ENCODE measurements at regions of chr10 and their contacts with region 1.

Region 1: GRCh38 chr10:37754538-37755323 is 102.7 kb downstream of the ZNF248 start:
- DNase-seq: peak; percentile 7
- ATAC-seq: peak; percentile 76
- H3K4me3 ChIP-seq: no peak overlapping the region
- H3K27ac ChIP-seq: no peak overlapping the region
- H3K4me1 ChIP-seq: no peaks in the 10 kb centered on the region
- H3K27me3 ChIP-seq: no peaks in the 10 kb centered on the region
- CTCF ChIP-seq: peak in 2 of 3 experiments; percentile 69 to 73; a peak in 4 of 6 replicates
- POLR2A ChIP-seq: no peak
- RAD21 ChIP-seq: peak; percentile 55

Region 2: GRCh38 chr10:36888929-36889573 is 865.7 kb before region 1 on chr10:
- CTCF ChIA-PET with region 1: no interaction called
- POLR2A ChIA-PET with region 1: no interaction called
- RAD21 ChIA-PET with region 1: no interaction called
- intact Hi-C with region 1: loop called (anchors 10 kb)
- DNase-seq: peak; percentile 8
- ATAC-seq: no peak
- H3K4me3 ChIP-seq: no peak overlapping the region
- H3K27ac ChIP-seq: no peak overlapping the region
- H3K4me1 ChIP-seq: no peaks in the 10 kb centered on the region
- H3K27me3 ChIP-seq: no peaks in the 10 kb centered on the region
- CTCF ChIP-seq: peak in 2 of 3 experiments; percentile 21 to 47; a peak in 3 of 6 replicates
- POLR2A ChIP-seq: no peak
- RAD21 ChIP-seq: peak; percentile 38; the same call in 1 of the 2 replicates

Region 3: DNA sequence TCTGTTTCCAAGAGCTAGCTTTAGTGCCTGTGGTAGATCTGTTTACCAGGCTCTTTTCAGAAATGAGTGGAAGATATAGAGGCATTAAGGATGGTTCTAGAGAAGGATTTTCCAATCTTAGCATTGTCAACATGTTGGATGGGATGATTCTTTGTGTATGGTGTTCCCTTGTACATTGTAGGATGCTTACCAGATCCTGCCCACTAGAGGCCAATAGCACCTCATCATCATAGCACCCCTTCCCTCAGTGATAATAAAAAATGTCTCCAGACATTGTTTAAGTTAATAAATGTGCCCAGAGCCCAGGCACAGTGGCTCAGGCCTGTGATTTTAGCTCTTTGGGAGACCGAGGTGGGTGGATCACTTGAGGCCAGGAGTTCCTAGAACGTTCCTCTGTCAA is 508.1 kb before region 1 on chr10:
- CTCF ChIA-PET with region 1: no interaction called
- POLR2A ChIA-PET with region 1: no interaction called
- RAD21 ChIA-PET with region 1: no interaction called
- intact Hi-C with region 1: no loop called
- DNase-seq: no peak
- ATAC-seq: no peak
- H3K4me3 ChIP-seq: no peak overlapping the region
- H3K27ac ChIP-seq: no peak overlapping the region
- H3K4me1 ChIP-seq: no peaks in the 10 kb centered on the region
- H3K27me3 ChIP-seq: no peaks in the 10 kb centered on the region
- CTCF ChIP-seq: no peak
- POLR2A ChIP-seq: no peak
- RAD21 ChIP-seq: no peak